Stomach (tissue), 19 donors: ENCODE measurements at regions of chr11 and their contacts with region 1.

Region 1: GRCh38 chr11:2151500-2152257 is 9.3 kb downstream of the INS start:
- DNase-seq: peak; percentile 87 to 93
- H3K4me3 ChIP-seq: no peak overlapping the region
- H3K27ac ChIP-seq: peak overlapping the region in 1 of 5 donors; percentile 16
- H3K4me1 ChIP-seq: peaks cover 4 to 8% (median 7%) of the 10 kb centered on the region in 4 donors
- H3K27me3 ChIP-seq: peaks cover 0 to 66% (median 37%) of the 10 kb centered on the region in 3 donors
- CTCF ChIP-seq: peak in 6 of 7 experiments; percentile 76 to 96 (median 82)
- EP300 ChIP-seq: no peak
- POLR2A ChIP-seq: no peak

Region 2: GRCh38 chr11:1652771-1653540 is 498.7 kb before region 1 on chr11:
- intact Hi-C with region 1: loop called (anchors 10 kb)
- DNase-seq: peak; percentile 83 to 86
- H3K4me3 ChIP-seq: no peak overlapping the region
- H3K27ac ChIP-seq: no peak overlapping the region
- H3K4me1 ChIP-seq: peaks cover 3 to 9% (median 4%) of the 10 kb centered on the region in 4 donors
- H3K27me3 ChIP-seq: peaks cover 0 to 44% (median 18%) of the 10 kb centered on the region in 3 donors
- CTCF ChIP-seq: peak in 5 of 7 experiments; percentile 91 to 99 (median 95)
- EP300 ChIP-seq: no peak
- POLR2A ChIP-seq: no peak

Region 3: DNA sequence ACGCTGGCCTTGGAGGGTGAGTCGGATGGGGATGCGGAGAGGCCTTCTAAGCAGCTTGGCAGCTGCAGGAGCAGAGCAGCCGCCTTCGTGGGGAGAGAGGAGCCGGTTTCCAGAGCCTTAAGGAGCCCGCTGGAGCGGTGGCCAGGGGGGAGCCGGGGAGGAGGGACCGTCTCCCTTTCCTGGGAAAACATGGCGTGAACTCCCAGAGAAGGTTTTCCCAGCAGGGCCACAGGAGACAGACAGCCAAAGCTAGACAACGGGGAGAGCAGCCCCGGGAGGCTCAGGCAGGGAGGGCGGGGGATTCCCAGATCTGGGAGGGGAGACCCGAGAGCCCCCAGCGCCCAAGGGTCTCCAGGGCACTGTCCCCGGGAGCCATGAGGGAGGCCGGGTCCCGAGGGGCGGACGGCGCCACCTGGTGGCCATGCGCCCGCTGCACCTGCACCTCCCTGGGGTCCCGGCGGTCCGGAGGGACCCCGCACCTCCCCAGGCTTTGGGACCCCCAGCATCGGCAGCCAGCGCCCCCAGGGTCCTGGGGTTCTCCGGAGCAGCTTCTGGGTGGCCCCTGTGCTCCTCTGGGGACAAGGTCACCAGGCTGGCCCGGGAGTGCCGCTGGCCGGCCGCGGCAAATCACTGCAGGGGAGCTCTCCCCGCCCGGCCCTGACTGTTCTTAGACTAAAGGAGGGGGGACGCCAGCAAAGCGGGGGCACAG is 319.3 kb before region 1 on chr11:
- intact Hi-C with region 1: loop called (anchors 5 kb)
- DNase-seq: peak; percentile 68 to 83
- H3K4me3 ChIP-seq: peak overlapping the region in 2 of 4 donors; percentile 16 to 18
- H3K27ac ChIP-seq: peak overlapping the region; percentile 23 to 86 (median 83)
- H3K4me1 ChIP-seq: peaks cover 38 to 77% (median 60%) of the 10 kb centered on the region in 4 donors
- H3K27me3 ChIP-seq: peaks cover 0 to 39% (median 0%) of the 10 kb centered on the region in 3 donors
- CTCF ChIP-seq: peak in 6 of 7 experiments; percentile 83 to 99 (median 94)
- EP300 ChIP-seq: no peak
- POLR2A ChIP-seq: no peak

Region 4: GRCh38 chr11:2330696-2331095 is 179.0 kb after region 1 on chr11:
- intact Hi-C with region 1: no loop called
- DNase-seq: no peak
- H3K4me3 ChIP-seq: no peak overlapping the region
- H3K27ac ChIP-seq: no peak overlapping the region
- H3K4me1 ChIP-seq: no peaks in the 10 kb centered on the region
- H3K27me3 ChIP-seq: no peaks in the 10 kb centered on the region
- CTCF ChIP-seq: no peak
- EP300 ChIP-seq: no peak
- POLR2A ChIP-seq: no peak